ENCODE measurements at regions of chr9 and their contacts with region 1.

Region 1: GRCh38 chr9:76023715-76024195 is 133.3 kb downstream of the PCSK5 start:
- DNase-seq: peak; percentile 11 to 86 (median 40)
- ATAC-seq: peak; percentile 90
- H3K4me3 ChIP-seq: peak overlapping the region; percentile 39
- H3K4me3 Mint-ChIP-seq: peak overlapping the region; percentile 79
- H3K27ac ChIP-seq: peak overlapping the region; percentile 51 to 64
- H3K27ac Mint-ChIP-seq: peak overlapping the region; percentile 93
- H3K4me1 ChIP-seq: peaks cover 56% of the 10 kb centered on the region
- H3K4me1 Mint-ChIP-seq: peaks cover 100% of the 10 kb centered on the region
- H3K27me3 ChIP-seq: no peaks in the 10 kb centered on the region
- H3K27me3 Mint-ChIP-seq: no peaks in the 10 kb centered on the region
- CTCF ChIP-seq: no peak

Region 2: DNA sequence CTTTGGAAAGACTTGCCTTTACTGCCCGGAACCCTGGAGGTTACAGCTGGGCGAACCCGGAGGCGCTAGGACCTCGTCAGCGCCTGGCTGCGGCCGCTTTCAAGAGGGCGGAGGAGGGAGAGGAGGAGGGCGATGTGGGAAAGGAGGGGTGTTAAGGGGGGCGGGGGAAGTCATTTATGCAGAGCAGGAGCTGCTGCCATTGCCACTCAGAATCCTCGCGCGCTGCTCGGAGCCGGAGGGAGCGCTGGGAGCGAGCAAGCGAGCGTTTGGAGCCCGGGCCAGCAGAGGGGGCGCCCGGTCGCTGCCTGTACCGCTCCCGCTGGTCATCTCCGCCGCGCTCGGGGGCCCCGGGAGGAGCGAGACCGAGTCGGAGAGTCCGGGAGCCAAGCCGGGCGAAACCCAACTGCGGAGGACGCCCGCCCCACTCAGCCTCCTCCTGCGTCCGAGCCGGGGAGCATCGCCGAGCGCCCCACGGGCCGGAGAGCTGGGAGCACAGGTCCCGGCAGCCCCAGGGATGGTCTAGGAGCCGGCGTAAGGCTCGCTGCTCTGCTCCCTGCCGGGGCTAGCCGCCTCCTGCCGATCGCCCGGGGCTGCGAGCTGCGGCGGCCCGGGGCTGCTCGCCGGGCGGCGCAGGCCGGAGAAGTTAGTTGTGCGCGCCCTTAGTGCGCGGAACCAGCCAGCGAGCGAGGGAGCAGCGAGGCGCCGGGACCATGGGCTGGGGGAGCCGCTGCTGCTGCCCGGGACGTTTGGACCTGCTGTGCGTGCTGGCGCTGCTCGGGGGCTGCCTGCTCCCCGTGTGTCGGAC is 133.1 kb before region 1 on chr9 and contains the start of gene PCSK5:
- CTCF ChIA-PET with region 1: no interaction called
- POLR2A ChIA-PET with region 1: interaction called, 13 read pairs
- intact Hi-C with region 1: loop called (anchors 1 to 5 kb)
- DNase-seq: peak; percentile 69 to 92 (median 81)
- ATAC-seq: peak; percentile 91
- H3K4me3 ChIP-seq: peak within 1 kb of the TSS; percentile 76
- H3K4me3 Mint-ChIP-seq: peak within 1 kb of the TSS; percentile 93
- H3K27ac ChIP-seq: peak within 1 kb of the TSS; percentile 11 to 63
- H3K27ac Mint-ChIP-seq: peak within 1 kb of the TSS; percentile 83
- H3K4me1 ChIP-seq: peaks cover 33% of the 10 kb centered on the region
- H3K4me1 Mint-ChIP-seq: peaks cover 50% of the 10 kb centered on the region
- H3K27me3 ChIP-seq: no peaks in the 10 kb centered on the region
- H3K27me3 Mint-ChIP-seq: no peaks in the 10 kb centered on the region
- CTCF ChIP-seq: no peak
- total RNA-seq, gene PCSK5: 14.4 to 15.2 TPM

Region 3: GRCh38 chr9:76086539-76086938 is 62.8 kb after region 1 on chr9:
- CTCF ChIA-PET with region 1: interaction called, 3 read pairs
- POLR2A ChIA-PET with region 1: no interaction called
- intact Hi-C with region 1: loop called in 1 of 2 experiments (anchors 10 kb)
- DNase-seq: no peak
- ATAC-seq: no peak
- H3K4me3 ChIP-seq: no peak overlapping the region
- H3K4me3 Mint-ChIP-seq: no peak overlapping the region
- H3K27ac ChIP-seq: no peak overlapping the region
- H3K27ac Mint-ChIP-seq: no peak overlapping the region
- H3K4me1 ChIP-seq: no peaks in the 10 kb centered on the region
- H3K4me1 Mint-ChIP-seq: no peaks in the 10 kb centered on the region
- H3K27me3 ChIP-seq: no peaks in the 10 kb centered on the region
- H3K27me3 Mint-ChIP-seq: no peaks in the 10 kb centered on the region
- CTCF ChIP-seq: no peak

Region 4: DNA sequence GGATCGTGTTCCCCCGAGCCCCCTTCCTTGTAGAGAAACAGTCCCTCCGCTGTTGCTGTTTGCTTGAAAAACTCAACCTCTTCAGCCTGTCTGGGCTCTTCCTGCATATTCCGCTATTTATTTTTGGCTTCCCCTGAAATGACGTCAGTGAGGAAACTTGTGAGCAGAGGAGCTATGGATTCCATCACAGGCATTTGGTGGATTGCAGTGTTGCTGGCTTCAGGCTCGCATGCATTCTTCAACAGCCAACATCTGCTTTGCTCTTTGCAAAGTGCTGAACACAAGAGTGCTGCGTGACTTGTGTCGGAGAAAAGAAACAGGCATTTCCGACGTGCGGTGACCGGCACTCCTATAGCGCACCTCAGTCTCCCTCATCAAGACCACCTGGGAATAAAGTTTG is 137.8 kb after region 1 on chr9:
- CTCF ChIA-PET with region 1: no interaction called
- POLR2A ChIA-PET with region 1: no interaction called
- intact Hi-C with region 1: loop called (anchors 5 to 10 kb)
- DNase-seq: no peak
- ATAC-seq: no peak
- H3K4me3 ChIP-seq: no peak overlapping the region
- H3K4me3 Mint-ChIP-seq: no peak overlapping the region
- H3K27ac ChIP-seq: no peak overlapping the region
- H3K27ac Mint-ChIP-seq: no peak overlapping the region
- H3K4me1 ChIP-seq: no peaks in the 10 kb centered on the region
- H3K4me1 Mint-ChIP-seq: peaks cover 7% of the 10 kb centered on the region
- H3K27me3 ChIP-seq: no peaks in the 10 kb centered on the region
- H3K27me3 Mint-ChIP-seq: no peaks in the 10 kb centered on the region
- CTCF ChIP-seq: no peak

Measured in CD4-positive, alpha-beta T cell (primary cell).